MCF 10A (cell line): ENCODE measurements at regions of chr6 and their contacts with region 1.

Region 1: DNA sequence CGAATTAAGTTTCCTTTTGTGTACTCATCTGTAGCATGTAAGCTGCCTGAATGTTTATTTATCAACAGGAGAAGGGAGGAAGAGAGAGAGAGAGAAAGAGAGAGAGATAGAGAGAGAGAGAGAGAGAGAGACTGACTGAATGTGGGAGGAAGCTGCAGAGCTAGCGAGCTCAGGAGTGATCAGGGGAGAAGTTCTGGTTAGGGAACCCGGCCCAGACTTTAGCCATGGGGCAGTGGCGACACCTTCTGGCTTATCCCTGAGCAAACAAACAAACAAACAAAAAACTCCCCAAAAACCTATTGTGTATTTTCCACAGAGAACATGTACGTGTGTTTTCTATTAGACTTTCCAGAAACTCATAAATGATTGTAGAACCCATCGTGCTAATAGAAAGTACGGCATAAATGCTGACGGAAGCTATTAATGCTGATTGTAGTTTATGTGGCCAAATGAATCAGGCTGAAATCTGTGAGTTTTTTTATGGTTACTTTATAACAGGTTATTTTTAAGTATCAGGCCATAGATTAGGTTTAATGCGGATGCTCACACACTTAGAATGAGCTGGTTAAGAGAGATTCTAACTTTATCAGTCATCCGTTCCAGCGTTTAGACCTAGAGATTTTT is 92.8 kb downstream of the CLIC5 start:
- DNase-seq: peak; percentile 73
- H3K4me3 Mint-ChIP-seq: no peak overlapping the region
- H3K27ac Mint-ChIP-seq: peak overlapping the region; percentile 39
- H3K4me1 Mint-ChIP-seq: peaks cover 6% of the 10 kb centered on the region
- H3K27me3 Mint-ChIP-seq: no peaks in the 10 kb centered on the region
- CTCF ChIP-seq: peak; percentile 64

Region 2: GRCh38 chr6:44593539-44593944 is 1329.3 kb before region 1 on chr6:
- CTCF ChIA-PET with region 1: interaction called, 4 read pairs
- POLR2A ChIA-PET with region 1: interaction called, 3 read pairs
- intact Hi-C with region 1: loop called (anchors 1 kb)
- DNase-seq: peak; percentile 68
- H3K4me3 Mint-ChIP-seq: no peak overlapping the region
- H3K27ac Mint-ChIP-seq: peak overlapping the region; percentile 35
- H3K4me1 Mint-ChIP-seq: no peaks in the 10 kb centered on the region
- H3K27me3 Mint-ChIP-seq: peaks cover 18% of the 10 kb centered on the region
- CTCF ChIP-seq: peak; percentile 55

Region 3: DNA sequence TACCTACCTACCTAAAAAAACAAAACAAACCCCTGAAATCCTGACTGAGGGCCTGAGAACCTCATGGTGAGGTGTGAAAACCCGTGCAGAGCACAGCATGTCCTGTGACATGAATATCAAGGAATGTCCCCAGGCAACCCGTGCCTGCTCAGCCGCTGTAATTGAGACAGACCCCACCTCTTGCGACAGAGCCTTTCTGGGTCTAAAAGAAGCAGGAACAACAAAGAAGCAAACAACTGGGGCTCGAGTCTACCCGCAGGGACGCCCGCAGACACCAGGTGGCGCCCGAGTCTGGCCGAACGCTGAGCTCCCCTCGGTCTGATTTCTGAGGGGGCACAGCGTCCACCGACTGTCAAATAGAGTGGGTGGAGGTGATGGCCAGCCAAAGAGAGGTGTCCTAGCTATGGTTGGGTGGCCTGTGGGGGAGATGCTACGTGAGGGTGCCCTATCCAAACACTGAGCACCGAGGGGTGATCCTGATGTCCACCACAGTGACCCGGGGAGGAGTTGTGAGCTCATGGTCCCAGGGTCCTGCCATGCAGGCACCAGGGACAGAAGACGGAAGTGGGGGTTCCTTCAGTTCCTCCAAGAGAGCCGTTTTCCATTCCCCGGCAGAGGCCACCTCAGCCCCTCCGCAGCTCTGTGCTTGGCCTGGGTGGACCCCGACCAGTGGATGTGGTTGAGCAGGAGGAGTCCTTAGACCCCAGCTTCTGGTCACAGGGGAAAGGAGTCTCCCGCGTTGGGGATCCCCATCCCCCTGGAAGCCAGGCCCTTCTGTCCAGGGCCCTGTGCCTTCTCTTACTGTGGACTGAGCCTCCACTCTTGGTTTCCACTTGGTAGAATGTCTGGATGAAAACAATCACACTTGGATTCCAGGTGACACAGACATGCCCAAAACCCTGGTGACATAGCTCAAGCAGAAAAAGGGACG is 1267.2 kb before region 1 on chr6:
- CTCF ChIA-PET with region 1: interaction called, 64 read pairs
- POLR2A ChIA-PET with region 1: interaction called, 3 read pairs
- intact Hi-C with region 1: loop called (anchors 1 kb)
- DNase-seq: peak; percentile 66
- H3K4me3 Mint-ChIP-seq: peak overlapping the region; percentile 3
- H3K27ac Mint-ChIP-seq: peak overlapping the region; percentile 76
- H3K4me1 Mint-ChIP-seq: peaks cover 13% of the 10 kb centered on the region
- H3K27me3 Mint-ChIP-seq: no peaks in the 10 kb centered on the region
- CTCF ChIP-seq: peak; percentile 97

Region 4: GRCh38 chr6:45086360-45087084 is 836.3 kb before region 1 on chr6:
- CTCF ChIA-PET with region 1: no interaction called
- POLR2A ChIA-PET with region 1: no interaction called
- intact Hi-C with region 1: loop called (anchors 10 kb)
- DNase-seq: no peak
- H3K4me3 Mint-ChIP-seq: no peak overlapping the region
- H3K27ac Mint-ChIP-seq: no peak overlapping the region
- H3K4me1 Mint-ChIP-seq: peaks cover 7% of the 10 kb centered on the region
- H3K27me3 Mint-ChIP-seq: no peaks in the 10 kb centered on the region
- CTCF ChIP-seq: peak; percentile 17

Region 5: DNA sequence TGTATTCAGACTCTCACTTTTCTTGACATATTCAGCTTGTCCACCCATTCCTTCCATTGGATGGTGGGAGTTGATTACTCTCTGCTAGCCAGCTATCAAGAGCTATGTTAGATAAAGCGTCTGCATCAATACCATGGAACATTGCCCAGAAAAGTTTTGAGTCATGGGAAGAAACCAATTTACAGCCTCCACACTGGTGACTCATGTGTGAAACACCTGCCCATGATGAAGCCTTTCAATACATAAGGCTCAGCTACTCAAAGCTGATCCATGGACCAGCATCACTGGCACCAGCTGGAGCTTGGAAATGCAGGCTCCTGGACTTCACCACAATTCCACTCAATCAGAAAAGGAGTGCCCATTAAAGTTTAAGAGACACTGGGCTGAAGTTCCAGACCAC is 796.3 kb after region 1 on chr6:
- CTCF ChIA-PET with region 1: no interaction called
- POLR2A ChIA-PET with region 1: no interaction called
- intact Hi-C with region 1: no loop called
- DNase-seq: peak; percentile 89
- H3K4me3 Mint-ChIP-seq: no peak overlapping the region
- H3K27ac Mint-ChIP-seq: no peak overlapping the region
- H3K4me1 Mint-ChIP-seq: peaks cover 14% of the 10 kb centered on the region
- H3K27me3 Mint-ChIP-seq: peaks cover 9% of the 10 kb centered on the region
- CTCF ChIP-seq: no peak